K562 (cell line): ENCODE measurements at regions of chr14 and their contacts with region 1.

Region 1: DNA sequence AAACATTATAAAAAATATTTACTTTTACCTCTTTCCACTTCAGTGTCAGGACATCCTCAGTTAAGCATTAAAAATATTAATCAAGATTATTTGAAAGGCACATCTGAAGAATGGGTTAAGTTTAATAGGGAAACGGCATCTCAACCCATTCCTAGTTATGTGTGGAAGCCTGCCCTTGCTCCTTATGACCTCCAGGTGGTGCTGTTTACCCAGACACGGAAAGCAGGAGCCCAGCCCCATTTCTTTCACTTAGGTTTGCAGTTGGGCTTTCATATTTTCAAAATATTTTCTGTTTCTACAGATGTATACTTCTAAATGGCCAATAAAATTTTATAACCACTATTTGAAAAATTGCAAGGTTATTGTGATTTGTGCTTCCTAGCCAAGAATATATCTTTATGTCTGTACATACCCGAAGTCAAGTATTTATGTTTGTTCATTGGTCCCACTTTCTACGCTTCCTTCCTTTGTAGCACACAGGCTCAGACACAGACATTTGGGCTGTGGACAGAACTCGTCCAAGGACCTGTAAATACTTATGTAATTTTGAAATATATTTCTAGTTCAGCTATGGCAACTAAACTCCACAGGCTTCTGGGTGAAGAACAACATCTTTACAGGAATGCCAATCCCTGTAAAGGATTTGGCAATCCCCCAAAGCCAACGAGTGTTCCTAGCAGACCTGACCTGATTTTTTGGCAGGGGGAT is 247.1 kb downstream of the AKAP6 start:
- DNase-seq: peak; percentile 37 to 49 (median 48)
- ATAC-seq: peak; percentile 80
- H3K4me3 ChIP-seq: no peak overlapping the region
- H3K27ac ChIP-seq: no peak overlapping the region
- H3K4me1 ChIP-seq: no peaks in the 10 kb centered on the region
- H3K27me3 ChIP-seq: no peaks in the 10 kb centered on the region
- CTCF ChIP-seq: peak; percentile 60 to 81 (median 68)
- EP300 ChIP-seq: no peak
- POLR2A ChIP-seq: no peak
- RAD21 ChIP-seq: peak; percentile 74 to 79

Region 2: DNA sequence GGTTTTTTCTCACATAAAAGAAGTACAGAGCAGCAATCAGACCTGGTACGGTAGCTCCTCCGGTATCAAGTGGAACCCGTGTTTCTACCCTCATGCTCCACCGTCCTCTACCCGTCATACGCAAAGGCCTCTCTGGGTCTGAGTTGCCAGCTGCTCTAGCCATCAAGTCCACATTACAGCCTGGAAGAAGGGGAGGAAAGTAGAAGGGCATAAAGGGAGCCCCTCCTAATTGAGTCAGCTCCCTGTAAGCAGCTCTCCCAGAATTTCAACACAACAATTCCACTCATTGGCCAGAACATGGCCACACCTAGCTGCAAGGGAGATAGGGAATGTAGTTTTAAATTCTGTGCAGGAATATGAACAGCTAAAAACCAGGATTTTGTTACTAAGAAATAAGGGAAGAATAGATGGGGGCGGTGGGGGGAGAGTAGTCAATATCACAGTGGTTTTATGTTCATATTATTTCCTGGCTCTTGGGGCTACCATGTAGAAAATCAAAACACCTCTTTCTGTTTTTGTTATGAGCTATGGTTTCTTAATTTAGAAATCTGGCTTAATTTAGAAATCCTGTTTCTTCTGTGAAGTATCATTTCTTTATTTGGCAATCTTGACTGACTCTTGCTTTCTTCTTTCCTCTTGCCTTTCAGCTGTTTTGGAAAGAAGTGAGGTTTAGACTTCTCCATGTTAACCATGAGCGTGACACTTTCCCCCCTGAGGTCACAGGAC is 143.3 kb before region 1 on chr14:
- CTCF ChIA-PET with region 1: no interaction called
- POLR2A ChIA-PET with region 1: no interaction called
- in situ Hi-C with region 1: no loop called
- intact Hi-C with region 1: no loop called
- DNase-seq: no peak
- ATAC-seq: no peak
- H3K4me3 ChIP-seq: no peak overlapping the region
- H3K27ac ChIP-seq: no peak overlapping the region
- H3K4me1 ChIP-seq: peaks cover 0 to 2% of the 10 kb centered on the region in 2 experiments; a peak in 2 of 5 replicates
- H3K27me3 ChIP-seq: no peaks in the 10 kb centered on the region
- CTCF ChIP-seq: no peak
- EP300 ChIP-seq: no peak
- POLR2A ChIP-seq: no peak
- RAD21 ChIP-seq: no peak

Region 3: GRCh38 chr14:33432407-33433023 is 856.3 kb after region 1 on chr14:
- CTCF ChIA-PET with region 1: no interaction called
- POLR2A ChIA-PET with region 1: no interaction called
- in situ Hi-C with region 1: no loop called
- intact Hi-C with region 1: loop called (anchors 5 kb)
- DNase-seq: peak in 1 of 4 experiments; percentile 12
- ATAC-seq: no peak
- H3K4me3 ChIP-seq: no peak overlapping the region
- H3K27ac ChIP-seq: no peak overlapping the region
- H3K4me1 ChIP-seq: no peaks in the 10 kb centered on the region
- H3K27me3 ChIP-seq: no peaks in the 10 kb centered on the region
- CTCF ChIP-seq: peak in 1 of 3 experiments; percentile 49; a peak in 3 of 6 replicates
- EP300 ChIP-seq: no peak
- POLR2A ChIP-seq: no peak
- RAD21 ChIP-seq: peak; percentile 19 to 47; a peak in 3 of 4 replicates

Region 4: GRCh38 chr14:33792720-33793368 is 1216.6 kb after region 1 on chr14:
- CTCF ChIA-PET with region 1: no interaction called
- POLR2A ChIA-PET with region 1: no interaction called
- in situ Hi-C with region 1: loop called (anchors 25 kb)
- intact Hi-C with region 1: no loop called
- DNase-seq: peak; percentile 69 to 77 (median 72)
- ATAC-seq: peak; percentile 93
- H3K4me3 ChIP-seq: no peak overlapping the region
- H3K27ac ChIP-seq: no peak overlapping the region
- H3K4me1 ChIP-seq: no peaks in the 10 kb centered on the region; a peak in 2 of 5 replicates
- H3K27me3 ChIP-seq: 0 out of 5 replicates have a peak, but pooled peaks cover 0 to 2% of the 10 kb centered on the region in 2 experiments
- CTCF ChIP-seq: peak; percentile 79 to 84 (median 79)
- EP300 ChIP-seq: no peak
- POLR2A ChIP-seq: no peak
- RAD21 ChIP-seq: peak; percentile 73 to 86

Region 5: DNA sequence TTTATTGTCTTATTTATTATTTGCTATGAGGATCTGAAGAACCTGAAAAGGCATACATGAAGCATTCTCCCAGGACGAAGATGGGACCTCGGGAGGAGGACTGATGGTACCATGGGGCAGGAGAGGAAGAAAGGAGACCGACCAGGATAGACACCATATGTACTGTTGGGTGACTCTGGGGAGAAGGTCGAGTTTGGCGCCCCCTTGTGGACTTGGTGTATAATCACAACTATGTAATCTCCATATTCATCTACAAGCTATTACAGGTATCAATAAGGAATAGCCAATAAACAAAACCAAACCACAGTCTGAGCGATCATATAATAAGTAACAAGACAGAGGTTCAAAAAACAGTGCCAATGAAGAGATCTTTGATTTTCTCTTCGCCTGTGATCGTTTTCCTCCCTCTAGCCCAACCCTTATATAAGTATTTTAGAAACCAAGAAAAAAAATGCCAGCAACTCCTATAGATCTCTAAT is 1746.7 kb after region 1 on chr14:
- CTCF ChIA-PET with region 1: interaction called, 6 read pairs
- POLR2A ChIA-PET with region 1: no interaction called
- in situ Hi-C with region 1: loop called (anchors 10 kb)
- intact Hi-C with region 1: loop called (anchors 5 kb)
- DNase-seq: peak; percentile 46 to 76 (median 52)
- ATAC-seq: peak; percentile 88
- H3K4me3 ChIP-seq: no peak overlapping the region
- H3K27ac ChIP-seq: no peak overlapping the region
- H3K4me1 ChIP-seq: no peaks in the 10 kb centered on the region
- H3K27me3 ChIP-seq: no peaks in the 10 kb centered on the region
- CTCF ChIP-seq: peak; percentile 42 to 65 (median 61); a peak in 5 of 6 replicates
- EP300 ChIP-seq: no peak
- POLR2A ChIP-seq: no peak
- RAD21 ChIP-seq: peak; percentile 22 to 39; a peak in 2 of 4 replicates